ENCODE measurements at regions of chr2 and their contacts with region 1.

Region 1: GRCh38 chr2:173965329-173966025 is at the start of gene SP3:
- DNase-seq: peak; percentile 84 to 98
- H3K4me3 ChIP-seq: peak within 1 kb of the TSS; percentile 93 to 98
- H3K27ac ChIP-seq: peak within 1 kb of the TSS; percentile 99
- H3K4me1 ChIP-seq: peaks cover 0 to 18% of the 10 kb centered on the region in 2 donors
- H3K27me3 ChIP-seq: no peaks in the 10 kb centered on the region
- CTCF ChIP-seq: no peak
- total RNA-seq, gene SP3: 58.0 TPM

Region 2: GRCh38 chr2:172555522-172556283 is 1409.8 kb before region 1 on chr2 and contains the start of gene PDK1:
- intact Hi-C with region 1: loop called (anchors 10 kb)
- DNase-seq: peak; percentile 52 to 93
- H3K4me3 ChIP-seq: peak within 1 kb of the TSS; percentile 96 to 97
- H3K27ac ChIP-seq: peak within 1 kb of the TSS; percentile 93 to 95
- H3K4me1 ChIP-seq: peaks cover 0 to 10% of the 10 kb centered on the region in 2 donors
- H3K27me3 ChIP-seq: no peaks in the 10 kb centered on the region
- CTCF ChIP-seq: no peak
- total RNA-seq, gene PDK1: 24.2 TPM

Region 3: DNA sequence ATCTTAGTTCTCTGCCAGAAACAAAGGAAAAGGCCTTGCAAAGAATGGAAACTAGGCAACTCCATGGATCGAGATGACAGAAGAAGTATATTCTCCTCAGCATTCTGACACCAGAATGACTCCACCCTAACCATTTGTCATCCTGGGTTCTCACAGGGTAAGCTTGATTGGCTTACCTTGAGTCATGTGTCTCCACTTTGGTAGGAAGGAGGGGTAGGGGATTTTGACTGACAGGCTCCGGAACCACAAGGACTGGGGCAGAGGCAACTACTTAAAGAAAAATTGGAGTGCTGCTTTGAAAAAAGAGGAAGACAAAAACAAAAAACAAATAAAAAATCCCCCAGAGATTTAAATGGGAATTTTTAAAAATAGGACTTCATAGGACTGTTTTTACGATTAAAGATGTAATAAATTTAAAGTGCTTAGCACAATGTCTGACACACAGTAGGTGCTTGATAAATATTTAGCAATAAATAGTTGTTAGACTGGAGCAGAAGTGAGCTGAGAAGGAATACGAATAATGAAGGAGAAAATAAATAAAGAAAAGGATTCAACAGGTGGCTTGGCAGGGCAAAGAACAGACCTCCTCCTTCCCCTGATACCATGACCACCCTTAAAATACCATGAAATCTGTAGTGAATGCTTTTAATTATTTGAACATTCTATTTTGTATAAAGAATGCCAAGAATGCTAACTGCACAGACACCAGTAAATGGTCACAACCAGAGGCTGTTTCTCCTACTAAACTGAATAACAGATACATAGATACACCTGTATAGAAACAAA is 380.6 kb before region 1 on chr2:
- intact Hi-C with region 1: no loop called
- DNase-seq: no peak
- H3K4me3 ChIP-seq: no peak overlapping the region
- H3K27ac ChIP-seq: no peak overlapping the region
- H3K4me1 ChIP-seq: no peaks in the 10 kb centered on the region
- H3K27me3 ChIP-seq: no peaks in the 10 kb centered on the region
- CTCF ChIP-seq: no peak

Region 4: DNA sequence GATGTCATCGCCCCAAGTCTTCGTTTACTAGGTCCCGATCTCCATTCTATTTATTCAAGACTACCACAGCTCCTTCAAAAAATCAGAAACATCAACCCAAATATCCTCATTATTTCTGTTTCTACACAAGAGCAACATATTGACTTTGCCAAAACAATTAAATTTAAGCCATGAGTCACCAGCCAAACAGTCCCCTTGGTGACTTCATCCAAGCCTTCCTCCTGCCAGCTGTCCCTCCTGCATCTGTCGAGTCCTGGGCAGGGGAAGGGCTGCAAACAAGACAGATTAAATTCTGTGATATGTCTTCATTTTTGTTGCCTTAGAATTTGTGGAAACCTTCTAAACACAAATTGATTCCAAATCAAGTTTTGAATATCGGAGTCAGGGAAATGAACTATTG is 110.6 kb before region 1 on chr2:
- intact Hi-C with region 1: loop called (anchors 2 kb)
- DNase-seq: peak in 1 of 2 donors; percentile 79
- H3K4me3 ChIP-seq: peak overlapping the region in 1 of 2 donors; percentile 14
- H3K27ac ChIP-seq: peak overlapping the region; percentile 59 to 77
- H3K4me1 ChIP-seq: peaks cover 0 to 31% of the 10 kb centered on the region in 2 donors
- H3K27me3 ChIP-seq: no peaks in the 10 kb centered on the region
- CTCF ChIP-seq: no peak

Region 5: DNA sequence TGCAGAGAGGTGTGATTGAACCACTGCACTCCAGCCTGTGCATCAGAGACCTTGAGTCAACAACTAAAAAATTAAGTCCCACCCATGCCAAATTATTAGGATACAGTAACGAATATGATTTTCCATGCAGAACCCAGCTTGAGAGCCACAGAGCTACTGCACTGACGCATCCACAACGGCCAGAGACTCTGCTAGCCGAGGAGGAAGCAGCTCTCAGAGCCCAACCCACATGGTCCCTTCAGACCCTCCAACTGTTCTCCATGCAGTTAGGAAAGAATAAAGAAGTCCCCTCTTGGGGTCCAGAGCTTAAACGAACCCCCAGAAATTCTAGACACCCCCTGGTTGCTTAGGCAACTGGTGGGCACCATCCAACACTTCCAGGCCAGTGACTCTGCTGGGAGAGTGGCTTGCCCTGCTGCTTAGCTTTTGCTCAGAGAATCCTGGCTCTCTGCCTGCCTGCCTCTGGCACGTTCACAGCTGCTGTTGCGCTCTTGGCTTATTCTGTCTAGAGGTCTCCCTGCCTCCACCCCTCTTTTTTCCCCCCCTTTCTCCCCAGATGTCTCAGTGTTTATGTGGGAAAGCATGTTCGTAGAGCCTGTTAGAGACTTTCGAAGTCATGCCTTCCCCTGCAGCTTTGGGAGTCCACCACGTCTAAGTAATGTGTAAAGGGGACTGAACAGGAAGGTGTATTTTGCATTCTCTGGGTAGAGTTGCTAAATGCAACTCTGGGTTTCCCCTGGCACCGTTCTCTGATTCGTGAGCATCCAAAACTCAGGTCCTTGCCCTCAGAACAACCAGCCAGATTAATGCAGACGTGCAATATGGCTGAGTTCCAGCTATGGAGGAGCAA is 25.7 kb after region 1 on chr2:
- intact Hi-C with region 1: loop called (anchors 2 kb)
- DNase-seq: peak; percentile 25 to 92
- H3K4me3 ChIP-seq: peak overlapping the region; percentile 27 to 28
- H3K27ac ChIP-seq: peak overlapping the region; percentile 76 to 83
- H3K4me1 ChIP-seq: peaks cover 18 to 59% of the 10 kb centered on the region in 2 donors
- H3K27me3 ChIP-seq: no peaks in the 10 kb centered on the region
- CTCF ChIP-seq: no peak

Region 6: GRCh38 chr2:174039551-174040416 is 74.3 kb after region 1 on chr2:
- intact Hi-C with region 1: loop called (anchors 1 kb)
- DNase-seq: peak; percentile 54 to 94
- H3K4me3 ChIP-seq: peak overlapping the region in 1 of 2 donors; percentile 26
- H3K27ac ChIP-seq: peak overlapping the region; percentile 67 to 83
- H3K4me1 ChIP-seq: peaks cover 9 to 24% of the 10 kb centered on the region in 2 donors
- H3K27me3 ChIP-seq: no peaks in the 10 kb centered on the region
- CTCF ChIP-seq: peak; percentile 76 to 90 (median 81)

Region 7: GRCh38 chr2:174341286-174341994 is 376.0 kb after region 1 on chr2:
- intact Hi-C with region 1: loop called (anchors 2 kb)
- DNase-seq: peak in 1 of 2 donors; percentile 91
- H3K4me3 ChIP-seq: peak overlapping the region; percentile 5 to 18
- H3K27ac ChIP-seq: no peak overlapping the region
- H3K4me1 ChIP-seq: peaks cover 17 to 27% of the 10 kb centered on the region in 2 donors
- H3K27me3 ChIP-seq: peaks cover 62% of the 10 kb centered on the region
- CTCF ChIP-seq: peak; percentile 85 to 98 (median 97)

Region 8: DNA sequence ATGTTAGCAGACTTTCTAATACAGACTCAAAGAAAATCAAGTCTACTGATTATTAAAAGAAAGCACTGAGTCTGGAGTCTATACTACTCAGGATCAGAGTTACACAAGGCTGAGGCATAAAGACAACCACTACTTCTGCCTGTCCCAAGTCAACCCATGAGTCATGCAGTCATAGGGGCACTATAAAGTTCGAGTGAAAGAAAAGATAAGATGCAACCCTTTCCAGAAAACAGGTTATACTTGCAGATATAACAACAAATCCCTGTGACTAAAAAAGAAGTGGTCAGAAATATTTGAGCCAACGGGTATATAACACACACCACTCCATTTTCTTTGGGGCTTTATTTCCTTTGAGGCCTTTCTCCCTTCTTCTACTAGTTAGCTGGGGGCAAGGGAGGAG is 411.5 kb after region 1 on chr2:
- intact Hi-C with region 1: no loop called
- DNase-seq: no peak
- H3K4me3 ChIP-seq: no peak overlapping the region
- H3K27ac ChIP-seq: no peak overlapping the region
- H3K4me1 ChIP-seq: no peaks in the 10 kb centered on the region
- H3K27me3 ChIP-seq: no peaks in the 10 kb centered on the region
- CTCF ChIP-seq: no peak

Measured in ascending aorta (tissue), 2 donors.